ENCODE measurements at regions of chr3 and their contacts with region 1.

Region 1: DNA sequence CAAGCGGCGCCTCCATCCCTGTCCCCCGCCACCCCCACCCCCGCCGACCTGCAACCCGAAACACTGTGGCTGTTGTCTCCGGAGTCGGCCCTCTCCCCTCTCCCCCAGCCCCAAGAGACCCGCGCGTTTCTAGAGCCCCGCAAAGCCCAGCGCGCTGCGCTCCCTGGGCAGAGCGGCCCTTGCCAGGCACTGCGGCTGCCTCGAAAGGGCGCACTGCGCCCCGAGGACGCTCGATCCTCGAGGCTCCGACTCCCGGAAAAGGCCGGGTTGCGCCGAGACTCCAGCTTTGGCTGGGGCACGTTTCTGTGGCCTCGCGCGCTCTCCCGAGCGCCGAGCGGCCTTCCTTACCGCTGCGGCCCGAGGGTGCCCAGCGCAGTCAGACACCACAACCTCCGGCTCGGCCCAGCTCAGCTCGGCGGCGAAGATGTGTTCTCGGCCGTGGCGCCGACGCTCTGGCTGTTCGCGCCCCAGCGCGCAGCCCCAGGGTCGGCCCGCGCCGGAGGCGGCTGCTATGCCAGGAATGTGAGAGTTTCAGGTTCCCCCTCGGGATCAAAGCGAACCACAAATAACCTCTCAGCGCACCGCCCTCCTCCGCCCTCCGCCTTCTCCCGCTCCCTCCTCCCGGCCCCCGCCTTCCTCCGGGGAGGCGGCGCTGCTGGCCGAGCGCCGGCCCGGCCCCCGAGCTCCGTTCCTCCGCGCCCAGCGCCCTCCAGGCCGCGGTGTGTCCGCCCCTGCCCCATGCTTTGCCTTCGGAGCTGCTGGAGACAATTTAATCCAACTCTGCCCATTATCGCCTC is at the start of gene AMOTL2:
- DNase-seq: peak; percentile 85 to 94 (median 87)
- H3K4me3 ChIP-seq: peak within 1 kb of the TSS; percentile 62
- H3K27ac ChIP-seq: peak within 1 kb of the TSS; percentile 86 to 95
- H3K4me1 ChIP-seq: peaks cover 19% of the 10 kb centered on the region
- H3K27me3 ChIP-seq: no peaks in the 10 kb centered on the region
- CTCF ChIP-seq: no peak
- EP300 ChIP-seq: no peak
- POLR2A ChIP-seq: peak; percentile 76
- total RNA-seq, gene AMOTL2: 20.5 to 60.4 (median 44.8) TPM

Region 2: DNA sequence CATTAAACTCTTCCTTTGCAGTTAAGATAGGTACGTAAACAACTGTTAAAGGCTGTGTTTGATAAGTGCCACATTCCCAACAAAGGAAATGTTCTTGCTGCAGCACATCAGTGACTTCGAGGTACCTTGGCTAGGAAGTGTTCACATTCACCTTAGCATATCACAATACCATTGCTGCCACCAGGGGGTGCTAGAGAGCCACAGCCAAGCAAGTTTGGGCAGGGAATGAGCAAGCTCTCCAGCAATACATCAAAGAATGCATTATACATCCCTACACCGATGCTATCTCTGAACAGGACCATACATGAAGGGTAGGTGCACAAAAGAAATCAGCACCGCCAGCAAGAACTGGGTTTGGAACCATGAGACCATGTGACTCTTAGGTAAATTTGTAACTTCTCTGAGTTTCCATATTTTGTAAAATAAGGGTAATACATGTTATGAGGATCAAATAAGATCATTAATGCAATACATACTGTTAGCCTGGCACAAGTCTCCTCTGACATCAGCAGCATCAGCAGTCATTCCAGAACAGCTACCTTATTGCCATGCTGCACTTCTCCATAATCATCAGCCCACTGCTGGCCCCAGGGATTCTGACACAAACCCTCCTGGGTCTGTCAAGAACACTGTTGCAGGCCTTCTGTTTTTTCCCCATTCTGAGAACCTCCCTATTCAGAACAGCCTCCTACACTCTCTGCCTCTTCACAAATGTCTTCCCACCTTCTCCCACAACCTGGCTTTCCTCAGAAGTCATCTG is 161.1 kb before region 1 on chr3:
- intact Hi-C with region 1: loop called in 2 of 4 experiments (anchors 5 to 10 kb)
- DNase-seq: peak; percentile 77 to 89 (median 88)
- H3K4me3 ChIP-seq: no peak overlapping the region
- H3K27ac ChIP-seq: no peak overlapping the region
- H3K4me1 ChIP-seq: peaks cover 8% of the 10 kb centered on the region
- H3K27me3 ChIP-seq: no peaks in the 10 kb centered on the region
- CTCF ChIP-seq: peak; percentile 93 to 98 (median 94)
- EP300 ChIP-seq: no peak
- POLR2A ChIP-seq: no peak

Region 3: DNA sequence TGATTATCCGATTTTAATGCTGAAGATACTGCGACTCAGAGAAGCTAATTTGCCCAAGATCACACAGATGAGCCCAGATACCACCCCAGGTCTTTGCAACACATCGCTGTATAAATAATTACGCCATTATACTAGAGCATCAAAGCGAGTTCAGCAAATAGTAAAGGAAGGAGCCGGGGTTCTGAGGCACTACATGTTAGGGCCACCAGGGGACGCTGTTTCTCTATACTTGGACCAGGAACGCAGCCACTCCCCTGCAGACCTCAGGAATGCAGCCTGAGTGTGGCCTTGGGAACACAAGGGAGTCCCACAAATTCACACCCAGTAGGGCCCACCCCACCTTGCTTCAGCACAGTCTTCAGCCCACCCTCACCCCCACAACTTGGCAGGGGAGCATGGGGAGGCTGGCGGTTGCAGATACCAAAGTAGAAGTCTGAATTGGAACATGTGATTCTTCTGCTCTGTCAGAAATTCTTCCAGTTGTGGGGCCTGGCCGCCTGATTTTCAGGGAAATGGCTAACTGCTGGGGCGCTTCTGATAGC is 65.8 kb before region 1 on chr3:
- intact Hi-C with region 1: loop called in 2 of 4 experiments (anchors 1 to 5 kb)
- DNase-seq: peak; percentile 91 to 92 (median 91)
- H3K4me3 ChIP-seq: no peak overlapping the region
- H3K27ac ChIP-seq: peak overlapping the region; percentile 7 to 51
- H3K4me1 ChIP-seq: peaks cover 4% of the 10 kb centered on the region
- H3K27me3 ChIP-seq: no peaks in the 10 kb centered on the region
- CTCF ChIP-seq: peak; percentile 96 to 100 (median 100)
- EP300 ChIP-seq: no peak
- POLR2A ChIP-seq: peak; percentile 31

Region 4: DNA sequence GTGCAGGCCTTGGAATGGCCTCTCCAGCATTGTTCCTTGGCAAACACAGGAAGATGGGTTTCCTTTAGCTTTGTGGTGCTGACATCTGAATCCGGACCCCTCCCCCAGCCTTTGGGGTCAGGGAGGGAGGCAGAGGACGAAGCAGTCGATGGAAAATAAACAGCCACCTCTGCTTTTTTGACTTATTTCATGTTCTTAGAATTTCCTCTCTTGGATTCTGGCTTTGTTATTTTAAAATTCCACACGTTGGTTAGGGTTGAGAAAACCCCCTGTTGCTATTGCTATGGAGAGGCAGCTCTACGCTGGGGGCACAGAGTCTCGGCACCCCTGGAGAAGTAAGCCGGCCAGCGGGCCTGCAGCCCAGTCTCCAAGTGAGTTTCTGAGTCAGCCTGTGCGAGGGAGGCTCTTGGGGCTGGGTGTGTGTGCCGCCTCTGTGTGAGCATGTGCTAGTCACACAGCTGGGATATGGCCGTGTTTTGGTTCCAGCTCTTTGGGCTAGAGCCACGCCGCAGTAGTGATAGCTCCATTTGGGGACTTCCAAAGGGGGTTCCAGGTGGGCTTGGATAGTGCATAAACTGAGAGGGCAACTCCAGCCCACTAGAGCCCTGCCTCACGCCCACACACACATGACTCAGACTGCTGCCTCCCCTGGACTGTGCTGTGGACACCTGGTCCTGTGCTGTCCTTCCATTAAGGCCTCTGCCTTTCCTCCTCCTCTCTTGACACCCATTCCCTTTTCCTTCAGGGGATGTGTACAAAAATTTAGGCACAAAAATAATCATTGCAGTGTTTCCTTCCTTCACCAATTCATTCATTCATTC is 58.7 kb before region 1 on chr3:
- intact Hi-C with region 1: loop called in 3 of 4 experiments (anchors 1 to 5 kb)
- DNase-seq: peak; percentile 68 to 83 (median 76)
- H3K4me3 ChIP-seq: no peak overlapping the region
- H3K27ac ChIP-seq: no peak overlapping the region
- H3K4me1 ChIP-seq: peaks cover 25% of the 10 kb centered on the region
- H3K27me3 ChIP-seq: no peaks in the 10 kb centered on the region
- CTCF ChIP-seq: no peak
- EP300 ChIP-seq: no peak
- POLR2A ChIP-seq: no peak

Region 5: GRCh38 chr3:134404366-134404885 is 30.2 kb after region 1 on chr3:
- intact Hi-C with region 1: loop called in 1 of 4 experiments (anchors 1 kb)
- DNase-seq: no peak
- H3K4me3 ChIP-seq: no peak overlapping the region
- H3K27ac ChIP-seq: no peak overlapping the region
- H3K4me1 ChIP-seq: peaks cover 2% of the 10 kb centered on the region
- H3K27me3 ChIP-seq: no peaks in the 10 kb centered on the region
- CTCF ChIP-seq: no peak
- EP300 ChIP-seq: no peak
- POLR2A ChIP-seq: no peak

Region 6: DNA sequence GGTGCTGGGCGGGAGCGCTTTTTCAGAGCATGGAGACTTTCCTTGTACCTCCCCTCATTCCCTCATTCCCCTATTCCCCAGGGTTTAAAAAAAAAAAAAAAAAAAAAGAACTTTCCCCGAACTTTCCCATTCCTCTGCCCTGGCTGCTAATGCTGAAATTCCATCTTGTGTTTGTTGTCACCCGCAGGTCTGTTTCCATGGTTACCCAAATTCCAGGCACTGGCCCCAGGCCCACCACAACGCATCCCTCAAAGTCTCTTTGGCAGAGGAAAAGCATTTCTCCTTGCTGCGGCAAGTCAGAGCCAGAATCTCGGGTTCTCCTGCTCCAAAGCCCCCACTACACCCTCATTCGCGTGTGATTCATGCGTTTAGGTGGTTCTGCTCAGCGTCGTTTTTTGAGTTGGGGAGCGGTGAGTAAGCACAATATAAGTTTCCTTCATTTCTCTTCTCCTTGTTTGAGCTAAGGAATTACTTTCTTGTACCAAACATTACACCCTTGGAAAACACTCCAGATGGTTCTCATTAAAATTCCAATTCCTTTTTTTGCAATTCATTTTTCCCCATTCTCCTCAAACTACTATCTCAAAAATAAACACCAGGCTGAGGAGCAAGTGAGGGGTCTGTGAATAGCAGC is 90.0 kb after region 1 on chr3:
- intact Hi-C with region 1: loop called in 3 of 4 experiments (anchors 5 to 10 kb)
- DNase-seq: peak; percentile 87 to 94 (median 91)
- H3K4me3 ChIP-seq: no peak overlapping the region
- H3K27ac ChIP-seq: peak overlapping the region in 1 of 2 donors; percentile 46
- H3K4me1 ChIP-seq: peaks cover 18% of the 10 kb centered on the region
- H3K27me3 ChIP-seq: no peaks in the 10 kb centered on the region
- CTCF ChIP-seq: no peak
- EP300 ChIP-seq: peak; percentile 40
- POLR2A ChIP-seq: no peak

Region 7: GRCh38 chr3:134473868-134474546 is 99.8 kb after region 1 on chr3:
- intact Hi-C with region 1: loop called in 3 of 4 experiments (anchors 5 to 10 kb)
- DNase-seq: peak; percentile 65 to 87 (median 73)
- H3K4me3 ChIP-seq: no peak overlapping the region
- H3K27ac ChIP-seq: no peak overlapping the region
- H3K4me1 ChIP-seq: no peaks in the 10 kb centered on the region
- H3K27me3 ChIP-seq: no peaks in the 10 kb centered on the region
- CTCF ChIP-seq: peak; percentile 60 to 89 (median 87)
- EP300 ChIP-seq: no peak
- POLR2A ChIP-seq: no peak

Measured in ovary (tissue), 10 donors.